Natural killer cell (primary cell): ENCODE measurements at regions of chr17 and their contacts with region 1.

Region 1: GRCh38 chr17:27236717-27237315 is 57.1 kb upstream of the WSB1 start:
- DNase-seq: peak; percentile 72 to 87
- ATAC-seq: peak; percentile 90 to 99 (median 91)
- H3K4me3 ChIP-seq: no peak overlapping the region
- H3K4me3 Mint-ChIP-seq: no peak overlapping the region
- H3K27ac ChIP-seq: no peak overlapping the region
- H3K27ac Mint-ChIP-seq: no peak overlapping the region
- H3K4me1 ChIP-seq: peaks cover 16% of the 10 kb centered on the region
- H3K4me1 Mint-ChIP-seq: no peaks in the 10 kb centered on the region
- H3K27me3 ChIP-seq: no peaks in the 10 kb centered on the region
- H3K27me3 Mint-ChIP-seq: peaks cover 0 to 6% of the 10 kb centered on the region in 2 donors
- CTCF ChIP-seq: peak; percentile 91

Region 2: GRCh38 chr17:27332485-27333409 is 95.9 kb after region 1 on chr17:
- intact Hi-C with region 1: loop called (anchors 1 kb)
- DNase-seq: peak; percentile 88 to 92
- ATAC-seq: peak; percentile 82 to 94 (median 86)
- H3K4me3 ChIP-seq: peak overlapping the region; percentile 74
- H3K4me3 Mint-ChIP-seq: peak overlapping the region; percentile 93
- H3K27ac ChIP-seq: peak overlapping the region; percentile 90
- H3K27ac Mint-ChIP-seq: peak overlapping the region; percentile 86 to 97
- H3K4me1 ChIP-seq: peaks cover 35% of the 10 kb centered on the region
- H3K4me1 Mint-ChIP-seq: peaks cover 23 to 29% of the 10 kb centered on the region in 2 donors
- H3K27me3 ChIP-seq: no peaks in the 10 kb centered on the region
- H3K27me3 Mint-ChIP-seq: no peaks in the 10 kb centered on the region
- CTCF ChIP-seq: peak; percentile 74

Region 3: DNA sequence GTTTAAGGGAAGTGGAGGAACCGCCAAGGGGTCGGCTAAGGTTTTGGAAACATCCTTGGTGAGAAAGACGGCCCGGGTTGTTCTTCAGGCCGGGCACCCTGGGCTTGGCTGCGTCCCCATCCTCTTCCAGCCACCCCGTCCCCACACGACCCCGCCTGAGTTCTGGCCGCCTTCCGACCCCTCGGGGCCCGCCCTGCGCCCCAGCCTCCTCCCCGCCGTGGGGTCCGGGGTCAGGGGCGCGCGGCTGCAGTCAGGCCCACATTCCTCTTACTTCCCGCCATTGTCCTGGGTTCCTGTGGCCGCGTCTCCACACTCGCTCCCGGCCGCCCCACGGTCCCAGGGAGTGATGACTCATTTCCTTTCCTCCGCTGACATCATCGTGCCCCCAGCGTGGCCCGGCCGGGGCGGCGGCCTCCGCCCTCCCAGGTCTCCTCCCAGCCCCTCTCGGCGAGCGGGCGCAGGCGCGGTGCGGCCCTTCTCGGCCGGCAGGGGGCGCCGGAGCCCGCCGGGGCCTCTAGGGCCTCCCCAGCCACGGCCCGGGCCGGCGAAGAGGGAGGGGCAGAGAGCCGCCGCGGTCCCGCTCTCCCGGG is 116.7 kb after region 1 on chr17:
- intact Hi-C with region 1: loop called (anchors 1 kb)
- DNase-seq: peak; percentile 88 to 93
- ATAC-seq: peak; percentile 84 to 95 (median 88)
- H3K4me3 ChIP-seq: peak overlapping the region; percentile 60
- H3K4me3 Mint-ChIP-seq: peak overlapping the region; percentile 83
- H3K27ac ChIP-seq: peak overlapping the region; percentile 95
- H3K27ac Mint-ChIP-seq: peak overlapping the region; percentile 89 to 98
- H3K4me1 ChIP-seq: peaks cover 21% of the 10 kb centered on the region
- H3K4me1 Mint-ChIP-seq: peaks cover 35 to 44% of the 10 kb centered on the region in 2 donors
- H3K27me3 ChIP-seq: no peaks in the 10 kb centered on the region
- H3K27me3 Mint-ChIP-seq: no peaks in the 10 kb centered on the region
- CTCF ChIP-seq: peak; percentile 93

Region 4: DNA sequence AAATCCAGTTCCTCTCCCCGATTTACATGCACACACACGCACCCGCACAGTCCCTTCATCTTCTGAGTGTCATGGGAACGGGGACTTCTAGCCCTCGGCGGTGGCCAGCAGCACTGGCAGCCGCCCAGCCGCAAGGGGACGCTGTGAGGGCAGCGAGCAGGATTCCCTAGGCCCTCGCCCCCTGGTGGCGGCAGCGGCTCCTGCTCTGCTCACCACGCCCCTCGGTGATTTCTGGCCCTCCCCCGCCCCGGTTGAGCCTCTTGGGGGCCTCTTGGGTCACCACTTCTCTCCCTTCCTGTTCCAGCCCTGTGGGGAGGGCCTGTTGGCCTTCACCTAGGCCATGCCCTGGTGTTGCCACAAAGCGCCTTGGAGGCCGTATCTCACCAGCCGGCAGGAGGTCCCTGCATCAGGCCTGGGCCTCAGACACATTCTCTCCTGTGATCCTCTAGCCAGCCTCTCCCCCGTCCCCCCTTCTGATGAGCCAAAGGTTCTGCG is 144.2 kb after region 1 on chr17:
- intact Hi-C with region 1: loop called (anchors 2 kb)
- DNase-seq: peak; percentile 80 to 86
- ATAC-seq: peak; percentile 95 to 99 (median 99)
- H3K4me3 ChIP-seq: no peak overlapping the region
- H3K4me3 Mint-ChIP-seq: peak overlapping the region; percentile 17
- H3K27ac ChIP-seq: no peak overlapping the region
- H3K27ac Mint-ChIP-seq: no peak overlapping the region
- H3K4me1 ChIP-seq: peaks cover 14% of the 10 kb centered on the region
- H3K4me1 Mint-ChIP-seq: peaks cover 0 to 6% of the 10 kb centered on the region in 2 donors
- H3K27me3 ChIP-seq: no peaks in the 10 kb centered on the region
- H3K27me3 Mint-ChIP-seq: peaks cover 8 to 19% of the 10 kb centered on the region in 2 donors
- CTCF ChIP-seq: peak; percentile 96

Region 5: GRCh38 chr17:27438348-27438998 is 201.7 kb after region 1 on chr17:
- intact Hi-C with region 1: no loop called
- DNase-seq: no peak
- ATAC-seq: no peak
- H3K4me3 ChIP-seq: no peak overlapping the region
- H3K4me3 Mint-ChIP-seq: no peak overlapping the region
- H3K27ac ChIP-seq: no peak overlapping the region
- H3K27ac Mint-ChIP-seq: no peak overlapping the region
- H3K4me1 ChIP-seq: no peaks in the 10 kb centered on the region
- H3K4me1 Mint-ChIP-seq: no peaks in the 10 kb centered on the region
- H3K27me3 ChIP-seq: no peaks in the 10 kb centered on the region
- H3K27me3 Mint-ChIP-seq: no peaks in the 10 kb centered on the region
- CTCF ChIP-seq: no peak

Region 6: GRCh38 chr17:27654654-27655524 is 418.1 kb after region 1 on chr17:
- intact Hi-C with region 1: loop called (anchors 2 kb)
- DNase-seq: peak; percentile 60 to 80
- ATAC-seq: peak; percentile 60 to 73 (median 69)
- H3K4me3 ChIP-seq: no peak overlapping the region
- H3K4me3 Mint-ChIP-seq: no peak overlapping the region
- H3K27ac ChIP-seq: no peak overlapping the region
- H3K27ac Mint-ChIP-seq: no peak overlapping the region
- H3K4me1 ChIP-seq: peaks cover 7% of the 10 kb centered on the region
- H3K4me1 Mint-ChIP-seq: peaks cover 6% of the 10 kb centered on the region in 2 donors
- H3K27me3 ChIP-seq: no peaks in the 10 kb centered on the region
- H3K27me3 Mint-ChIP-seq: no peaks in the 10 kb centered on the region
- CTCF ChIP-seq: peak; percentile 93